Panc1 (cell line): ENCODE measurements at regions of chr1 and their contacts with region 1.

Region 1: GRCh38 chr1:16954579-16954978 is 25.8 kb downstream of the MFAP2 start:
- DNase-seq: no peak
- ATAC-seq: no peak
- H3K4me3 ChIP-seq: no peak overlapping the region
- H3K27ac ChIP-seq: no peak overlapping the region
- H3K4me1 ChIP-seq: no peaks in the 10 kb centered on the region
- H3K27me3 ChIP-seq: no peaks in the 10 kb centered on the region
- CTCF ChIP-seq: no peak

Region 2: GRCh38 chr1:17045634-17046333 is 91.2 kb after region 1 on chr1:
- CTCF ChIA-PET with region 1: interaction called, 4 read pairs
- POLR2A ChIA-PET with region 1: interaction called, 3 read pairs
- in situ Hi-C with region 1: no loop called
- intact Hi-C with region 1: loop called (anchors 5 kb)
- DNase-seq: no peak
- ATAC-seq: 0 out of 2 replicates have a peak, but pooled peaks have one; percentile 46
- H3K4me3 ChIP-seq: no peak overlapping the region
- H3K27ac ChIP-seq: no peak overlapping the region
- H3K4me1 ChIP-seq: 0 out of 2 replicates have a peak, but pooled peaks cover 5% of the 10 kb centered on the region
- H3K27me3 ChIP-seq: no peaks in the 10 kb centered on the region
- CTCF ChIP-seq: peak; percentile 76; the same call in 1 of the 2 replicates